Dorsolateral prefrontal cortex (tissue), 120 donors: ENCODE measurements at regions of chr2 and their contacts with region 1.

Region 1: GRCh38 chr2:235779444-235779896 is 285.6 kb downstream of the AGAP1 start:
- DNase-seq: peak; percentile 58 to 86 (median 76)
- H3K4me3 ChIP-seq: no peak overlapping the region
- H3K27ac ChIP-seq: peak overlapping the region in 1 of 59 donors; percentile 4
- H3K27me3 ChIP-seq: no peaks in the 10 kb centered on the region
- CTCF ChIP-seq: peak; percentile 59 to 90 (median 81)

Region 2: GRCh38 chr2:235843591-235844395 is 64.3 kb after region 1 on chr2:
- intact Hi-C with region 1: loop called in 1 of 2 experiments (anchors 10 kb)
- DNase-seq: no peak
- H3K4me3 ChIP-seq: no peak overlapping the region
- H3K27ac ChIP-seq: peak overlapping the region in 1 of 59 donors; percentile 14
- H3K27me3 ChIP-seq: no peaks in the 10 kb centered on the region
- CTCF ChIP-seq: no peak

Region 3: DNA sequence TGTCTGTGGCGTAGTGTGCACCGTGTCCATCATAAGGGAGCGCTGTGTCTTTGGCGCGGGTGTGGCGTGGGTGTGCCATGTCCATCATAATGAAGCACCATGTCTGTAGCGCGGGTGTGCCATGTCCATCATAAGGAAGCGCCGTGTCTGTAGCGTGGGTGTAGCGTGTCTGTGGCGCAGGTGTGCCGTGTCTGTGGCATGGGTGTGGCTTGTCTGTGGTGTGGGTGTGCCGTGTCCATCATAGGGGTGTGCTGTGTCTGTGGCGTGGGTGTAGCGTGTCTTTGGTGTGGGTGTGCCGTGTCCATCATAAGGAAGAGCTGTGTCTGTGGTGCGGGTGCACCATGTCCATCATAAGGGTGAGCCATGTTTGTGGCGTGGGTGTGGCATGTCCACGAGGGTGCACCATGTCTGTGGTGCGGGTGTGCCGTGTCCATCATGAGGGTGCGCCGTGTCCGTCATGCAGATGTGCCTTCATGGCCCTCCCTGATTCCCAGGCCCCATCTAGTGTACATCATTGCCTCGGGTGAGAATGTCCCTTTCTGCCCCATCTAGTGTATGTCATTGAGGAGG is 113.7 kb after region 1 on chr2:
- intact Hi-C with region 1: no loop called
- DNase-seq: no peak
- H3K4me3 ChIP-seq: no peak overlapping the region
- H3K27ac ChIP-seq: no peak overlapping the region
- H3K27me3 ChIP-seq: no peaks in the 10 kb centered on the region
- CTCF ChIP-seq: no peak

Region 4: DNA sequence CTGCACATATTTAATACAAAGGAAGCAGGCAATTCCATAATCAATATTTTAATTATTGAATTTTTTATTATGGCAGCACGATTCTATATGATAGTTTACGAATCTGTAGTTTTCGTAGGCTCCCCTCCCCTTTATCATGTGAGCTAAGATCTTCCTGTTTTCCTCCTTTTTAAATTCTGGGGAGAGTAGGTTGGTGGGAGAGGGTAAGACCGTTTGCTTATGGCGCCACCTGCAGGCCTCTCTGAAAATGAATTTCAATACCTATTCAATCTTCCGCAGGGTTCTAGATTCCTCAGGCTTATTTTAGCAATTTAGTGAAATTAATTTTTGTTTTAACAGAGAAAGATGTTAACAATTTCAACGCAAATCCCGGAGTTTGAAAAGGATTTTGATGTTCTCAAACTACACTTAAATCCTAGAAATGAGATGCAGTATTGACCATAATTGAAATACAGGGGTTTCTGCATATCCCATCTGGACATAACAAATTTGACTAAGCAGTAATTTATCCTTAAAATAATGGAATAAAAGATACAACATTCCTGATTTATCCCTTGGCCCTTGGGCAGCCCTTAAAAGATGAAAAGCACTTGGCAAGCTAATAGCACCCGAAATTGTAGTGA is 401.5 kb after region 1 on chr2:
- intact Hi-C with region 1: loop called in 1 of 2 experiments (anchors 5 kb)
- DNase-seq: peak in 4 of 10 donors; percentile 25 to 69 (median 40)
- H3K4me3 ChIP-seq: no peak overlapping the region
- H3K27ac ChIP-seq: no peak overlapping the region
- H3K27me3 ChIP-seq: peaks cover 12 to 79% (median 61%) of the 10 kb centered on the region in 45 donors
- CTCF ChIP-seq: peak; percentile 45 to 87 (median 71)

Region 5: DNA sequence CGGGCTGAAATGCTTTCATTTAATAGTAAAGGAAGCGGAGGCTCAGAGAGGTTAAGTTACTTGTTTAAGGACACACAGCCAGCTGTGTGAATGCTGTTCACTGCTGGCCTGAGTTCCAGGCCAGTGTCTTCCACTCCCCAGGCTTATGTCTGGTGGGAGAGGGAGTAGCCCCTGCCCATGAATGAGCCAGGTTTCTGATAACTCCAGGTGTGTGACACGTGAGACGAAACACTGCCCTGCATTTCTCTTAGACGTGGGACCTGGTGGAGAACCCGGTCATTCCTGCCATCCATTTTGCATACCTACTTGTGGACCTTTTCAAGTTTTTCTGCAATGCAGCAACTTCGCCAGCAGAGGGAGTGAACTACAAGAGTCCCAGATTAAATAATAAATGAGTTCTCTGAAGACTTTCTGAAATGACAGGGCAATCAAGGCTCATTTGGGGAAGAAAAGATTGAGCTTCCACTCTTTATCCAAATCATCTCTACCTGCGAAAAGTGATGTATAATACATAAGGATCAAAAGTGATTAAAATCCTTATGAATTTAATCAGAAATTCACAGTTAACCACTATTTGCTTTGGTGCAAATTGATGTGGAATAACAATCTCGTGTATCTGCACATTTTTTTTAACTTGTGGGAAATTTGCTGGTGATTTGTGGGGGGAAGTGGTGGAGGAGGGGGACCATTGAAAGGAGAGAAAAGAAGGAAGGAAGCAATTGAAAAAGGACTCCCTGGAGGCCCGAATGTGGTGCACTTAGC is 564.1 kb after region 1 on chr2:
- intact Hi-C with region 1: loop called in 1 of 2 experiments (anchors 10 kb)
- DNase-seq: peak in 6 of 10 donors; percentile 41 to 91 (median 66)
- H3K4me3 ChIP-seq: no peak overlapping the region
- H3K27ac ChIP-seq: peak overlapping the region in 6 of 59 donors; percentile 0 to 67 (median 35)
- H3K27me3 ChIP-seq: no peaks in the 10 kb centered on the region
- CTCF ChIP-seq: peak; percentile 61 to 91 (median 84)

Region 6: DNA sequence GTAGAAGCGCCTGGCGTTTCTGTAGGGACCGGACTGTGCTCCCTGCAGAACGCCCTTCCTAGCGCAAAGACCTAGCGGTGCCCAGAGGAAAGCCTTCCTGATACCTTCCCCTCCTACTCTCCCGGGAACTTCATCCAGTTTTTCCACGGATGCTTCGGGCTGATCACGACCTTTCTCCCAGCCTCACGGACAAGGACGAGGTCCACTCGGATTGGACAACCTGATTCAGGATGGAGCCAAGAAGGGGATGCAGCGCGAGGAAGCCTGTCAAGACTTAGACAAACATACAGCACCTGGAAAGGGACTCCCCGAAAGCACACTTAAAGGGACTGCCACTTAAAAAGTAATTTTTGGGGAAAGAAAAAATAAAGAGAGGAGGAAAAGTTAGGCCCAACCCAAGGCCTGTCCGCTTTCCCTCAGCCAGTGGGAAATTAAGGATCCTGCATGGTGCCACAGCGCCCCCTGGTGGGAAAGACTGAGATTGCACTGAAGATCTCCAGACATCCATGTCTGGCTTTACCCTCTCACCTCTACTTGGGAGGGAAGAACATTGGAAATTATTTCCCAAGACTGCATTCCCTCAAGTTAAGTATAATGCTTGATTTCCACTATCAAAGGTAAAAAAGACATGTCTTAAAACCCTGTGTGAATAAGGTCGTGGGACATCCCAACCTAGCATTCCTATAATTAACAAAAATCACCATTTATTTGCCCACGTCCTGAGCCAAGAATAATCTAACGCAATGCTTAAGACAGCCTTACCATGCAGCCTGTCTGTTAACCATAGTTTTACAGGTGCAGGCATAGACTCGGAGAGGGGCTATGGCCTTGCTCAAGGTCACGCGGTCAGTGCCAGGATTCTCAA is 1292.8 kb after region 1 on chr2:
- intact Hi-C with region 1: loop called in 1 of 2 experiments (anchors 10 kb)
- DNase-seq: peak; percentile 49 to 87 (median 74)
- H3K4me3 ChIP-seq: no peak overlapping the region
- H3K27ac ChIP-seq: no peak overlapping the region
- H3K27me3 ChIP-seq: no peaks in the 10 kb centered on the region
- CTCF ChIP-seq: peak; percentile 93 to 100 (median 98)